ENCODE measurements at regions of chrX and their contacts with region 1.

Region 1: GRCh38 chrX:133215747-133216146 is 2.4 kb downstream of the TFDP3 start:
- DNase-seq: peak; percentile 5
- H3K4me3 Mint-ChIP-seq: no peak overlapping the region
- H3K27ac Mint-ChIP-seq: no peak overlapping the region
- H3K4me1 Mint-ChIP-seq: no peaks in the 10 kb centered on the region
- H3K27me3 Mint-ChIP-seq: no peaks in the 10 kb centered on the region

Region 2: DNA sequence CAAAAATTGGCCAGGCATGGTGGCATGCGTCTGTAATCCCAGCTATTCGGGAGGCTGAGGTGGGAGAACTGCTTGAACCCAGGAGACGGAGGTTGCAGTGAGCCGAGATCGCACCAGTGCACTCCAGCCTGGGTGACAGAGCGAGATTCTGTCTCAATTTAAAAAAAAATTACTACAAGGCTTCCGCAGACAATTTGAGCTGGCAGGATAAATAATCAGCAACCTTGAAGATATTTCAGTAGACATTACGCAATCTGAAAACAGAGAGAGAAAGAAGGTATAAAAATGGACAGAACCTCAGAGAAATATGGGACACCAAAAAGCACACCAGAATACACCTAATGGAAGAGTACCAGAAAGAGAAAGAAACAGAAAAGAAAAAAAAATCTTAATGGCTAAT is 282.6 kb before region 1 on chrX:
- CTCF ChIA-PET with region 1: no interaction called
- intact Hi-C with region 1: no loop called
- DNase-seq: no peak
- H3K4me3 Mint-ChIP-seq: no peak overlapping the region
- H3K27ac Mint-ChIP-seq: no peak overlapping the region
- H3K4me1 Mint-ChIP-seq: no peaks in the 10 kb centered on the region
- H3K27me3 Mint-ChIP-seq: no peaks in the 10 kb centered on the region

Region 3: GRCh38 chrX:132968296-132968949 is 247.3 kb before region 1 on chrX:
- CTCF ChIA-PET with region 1: no interaction called
- intact Hi-C with region 1: loop called (anchors 10 kb)
- DNase-seq: no peak
- H3K4me3 Mint-ChIP-seq: no peak overlapping the region
- H3K27ac Mint-ChIP-seq: no peak overlapping the region
- H3K4me1 Mint-ChIP-seq: no peaks in the 10 kb centered on the region
- H3K27me3 Mint-ChIP-seq: peaks cover 3% of the 10 kb centered on the region

Measured in activated naive CD4-positive, alpha-beta T cell treated with anti-CD3 and anti-CD28 coated beads for 36 hours (primary cell).